T-cell (primary cell): ENCODE measurements at regions of chr10 and their contacts with region 1.

Region 1: GRCh38 chr10:16777473-16778370 is 39.5 kb downstream of the RSU1 start:
- DNase-seq: peak in 4 of 35 experiments; percentile 14 to 84 (median 25)
- ATAC-seq: peak in 3 of 4 experiments; percentile 45 to 50 (median 49)
- H3K4me3 ChIP-seq: no peak overlapping the region
- H3K4me3 Mint-ChIP-seq: peak overlapping the region in 1 of 3 donors; percentile 26
- H3K27ac ChIP-seq: no peak overlapping the region
- H3K27ac Mint-ChIP-seq: peak overlapping the region; percentile 88
- H3K4me1 ChIP-seq: peaks cover 3 to 22% of the 10 kb centered on the region in 2 experiments
- H3K4me1 Mint-ChIP-seq: peaks cover 39% of the 10 kb centered on the region in 3 donors
- H3K27me3 ChIP-seq: no peaks in the 10 kb centered on the region
- H3K27me3 Mint-ChIP-seq: no peaks in the 10 kb centered on the region

Region 2: DNA sequence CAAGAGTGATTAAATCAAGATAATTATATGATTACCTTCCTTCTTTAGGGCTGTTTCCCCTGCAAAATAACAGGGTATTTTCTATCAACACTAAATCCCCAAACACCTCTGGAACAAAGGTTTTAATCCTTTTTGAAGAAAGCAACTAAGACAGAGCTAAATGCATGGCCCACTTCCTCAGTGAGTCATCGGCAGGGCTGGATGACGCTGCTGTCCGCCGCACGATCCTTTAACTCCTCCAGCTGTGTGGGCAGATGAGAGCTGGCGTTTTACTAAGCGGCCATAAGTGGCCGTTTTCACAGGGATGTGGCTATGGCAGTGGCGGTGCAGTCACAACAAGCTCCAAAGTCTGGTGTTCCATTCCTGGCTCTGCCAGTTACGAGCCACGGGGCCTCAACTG is 180.1 kb before region 1 on chr10:
- CTCF ChIA-PET with region 1: no interaction called
- POLR2A ChIA-PET with region 1: no interaction called
- DNase-seq: no peak
- ATAC-seq: no peak
- H3K4me3 ChIP-seq: no peak overlapping the region
- H3K4me3 Mint-ChIP-seq: no peak overlapping the region
- H3K27ac ChIP-seq: no peak overlapping the region
- H3K27ac Mint-ChIP-seq: no peak overlapping the region
- H3K4me1 ChIP-seq: no peaks in the 10 kb centered on the region
- H3K4me1 Mint-ChIP-seq: no peaks in the 10 kb centered on the region
- H3K27me3 ChIP-seq: no peaks in the 10 kb centered on the region
- H3K27me3 Mint-ChIP-seq: no peaks in the 10 kb centered on the region

Region 3: GRCh38 chr10:16732376-16732775 is 45.3 kb before region 1 on chr10:
- CTCF ChIA-PET with region 1: interaction called in 1 of 2 experiments, 11 read pairs
- POLR2A ChIA-PET with region 1: no interaction called
- DNase-seq: no peak
- ATAC-seq: no peak
- H3K4me3 ChIP-seq: no peak overlapping the region
- H3K4me3 Mint-ChIP-seq: no peak overlapping the region
- H3K27ac ChIP-seq: no peak overlapping the region
- H3K27ac Mint-ChIP-seq: no peak overlapping the region
- H3K4me1 ChIP-seq: peaks cover 0 to 6% of the 10 kb centered on the region in 2 experiments
- H3K4me1 Mint-ChIP-seq: peaks cover 17 to 37% (median 23%) of the 10 kb centered on the region in 3 donors
- H3K27me3 ChIP-seq: no peaks in the 10 kb centered on the region
- H3K27me3 Mint-ChIP-seq: no peaks in the 10 kb centered on the region

Region 4: DNA sequence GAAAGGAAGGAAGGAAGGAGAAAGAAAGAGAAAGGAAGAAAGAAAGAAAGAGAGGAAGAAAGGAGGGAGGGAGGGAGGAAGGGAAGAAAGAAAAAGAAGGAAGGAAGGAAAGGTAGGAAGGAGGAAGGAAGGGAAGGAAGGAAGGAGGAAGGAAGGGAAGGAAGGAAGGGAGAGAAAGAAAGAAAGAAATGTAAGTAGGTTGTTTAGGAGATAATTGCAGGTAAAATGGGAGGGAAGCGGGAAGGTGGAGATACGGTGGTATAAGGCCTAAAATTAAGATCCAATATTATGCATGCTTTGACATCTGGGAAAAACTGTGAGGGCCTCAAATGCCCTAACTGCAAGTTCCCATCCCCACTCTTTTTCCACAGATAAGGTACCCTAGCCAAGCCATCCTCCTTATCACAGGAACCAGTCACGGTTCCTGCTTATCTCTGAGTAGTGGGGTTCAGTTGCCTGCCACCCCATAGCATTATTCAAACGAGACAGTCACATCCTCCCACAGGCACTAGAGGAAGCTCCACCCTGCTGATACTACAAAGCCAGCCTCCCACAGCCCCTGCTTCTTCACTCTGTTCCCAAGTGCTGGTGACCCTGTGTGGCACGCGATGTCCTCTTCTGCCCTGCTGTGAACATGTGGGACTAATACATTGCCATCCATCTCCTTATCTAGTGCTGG is 648.0 kb after region 1 on chr10:
- CTCF ChIA-PET with region 1: no interaction called
- POLR2A ChIA-PET with region 1: interaction called in 1 of 2 experiments, 13 read pairs
- DNase-seq: peak in 33 of 35 experiments; percentile 12 to 65 (median 35)
- ATAC-seq: peak; percentile 69 to 78 (median 75)
- H3K4me3 ChIP-seq: no peak overlapping the region
- H3K4me3 Mint-ChIP-seq: peak overlapping the region in 2 of 3 donors; percentile 38 to 82
- H3K27ac ChIP-seq: peak overlapping the region; percentile 54
- H3K27ac Mint-ChIP-seq: peak overlapping the region; percentile 89 to 95
- H3K4me1 ChIP-seq: peaks cover 64 to 65% of the 10 kb centered on the region in 2 experiments
- H3K4me1 Mint-ChIP-seq: peaks cover 81 to 83% (median 81%) of the 10 kb centered on the region in 3 donors
- H3K27me3 ChIP-seq: no peaks in the 10 kb centered on the region
- H3K27me3 Mint-ChIP-seq: no peaks in the 10 kb centered on the region